AG04450 (cell line): ENCODE measurements at regions of chrX and their contacts with region 1.

Region 1: DNA sequence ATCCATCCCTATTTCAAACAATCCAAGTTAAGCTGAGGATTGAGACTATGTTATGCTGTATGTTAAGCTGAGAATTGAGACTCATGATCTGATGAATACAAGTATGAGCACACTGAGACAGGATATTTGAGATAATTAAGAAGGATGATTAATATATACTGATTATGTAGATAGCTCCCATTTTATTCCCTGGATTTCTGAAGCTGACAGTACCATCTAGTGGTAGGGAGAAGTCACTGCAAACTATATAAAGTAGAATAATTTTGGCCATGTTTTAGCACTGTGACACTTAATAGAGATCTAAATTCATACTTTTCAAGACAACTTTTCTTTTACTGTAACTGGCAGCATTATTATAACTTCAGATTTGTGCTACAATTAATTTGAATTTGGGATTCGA is 63.8 kb upstream of the HPRT1 start:
- DNase-seq: no peak
- H3K4me3 ChIP-seq: no peak overlapping the region
- H3K27ac ChIP-seq: no peak overlapping the region
- H3K27me3 ChIP-seq: no peaks in the 10 kb centered on the region
- CTCF ChIP-seq: peak; percentile 59

Region 2: GRCh38 chrX:134377537-134377936 is 18.6 kb before region 1 on chrX:
- CTCF ChIA-PET with region 1: interaction called, 37 read pairs
- POLR2A ChIA-PET with region 1: no interaction called
- DNase-seq: no peak
- H3K4me3 ChIP-seq: no peak overlapping the region
- H3K27ac ChIP-seq: no peak overlapping the region
- H3K27me3 ChIP-seq: no peaks in the 10 kb centered on the region
- CTCF ChIP-seq: peak; percentile 43

Region 3: DNA sequence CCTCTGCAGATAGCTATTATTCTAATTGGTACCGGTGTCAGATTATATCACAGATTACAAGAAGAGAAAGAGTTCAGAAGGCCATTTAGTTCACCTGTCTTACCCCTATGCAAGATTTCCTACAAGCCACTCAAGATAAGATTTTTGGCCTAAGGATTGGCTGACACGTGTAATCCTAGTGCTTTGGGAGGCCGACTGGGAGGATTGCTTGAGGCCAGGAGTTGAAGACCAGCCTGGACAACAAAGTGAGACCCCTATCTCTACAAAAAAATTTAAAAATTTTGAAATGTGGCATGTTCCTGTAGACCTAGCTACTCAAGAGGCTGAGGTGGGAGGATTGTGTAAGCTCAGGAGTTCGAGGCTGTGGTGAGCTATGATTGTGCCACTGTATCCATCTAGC is 13.4 kb before region 1 on chrX:
- CTCF ChIA-PET with region 1: interaction called, 37 read pairs
- POLR2A ChIA-PET with region 1: no interaction called
- DNase-seq: no peak
- H3K4me3 ChIP-seq: no peak overlapping the region
- H3K27ac ChIP-seq: no peak overlapping the region
- H3K27me3 ChIP-seq: no peaks in the 10 kb centered on the region
- CTCF ChIP-seq: no peak

Region 4: DNA sequence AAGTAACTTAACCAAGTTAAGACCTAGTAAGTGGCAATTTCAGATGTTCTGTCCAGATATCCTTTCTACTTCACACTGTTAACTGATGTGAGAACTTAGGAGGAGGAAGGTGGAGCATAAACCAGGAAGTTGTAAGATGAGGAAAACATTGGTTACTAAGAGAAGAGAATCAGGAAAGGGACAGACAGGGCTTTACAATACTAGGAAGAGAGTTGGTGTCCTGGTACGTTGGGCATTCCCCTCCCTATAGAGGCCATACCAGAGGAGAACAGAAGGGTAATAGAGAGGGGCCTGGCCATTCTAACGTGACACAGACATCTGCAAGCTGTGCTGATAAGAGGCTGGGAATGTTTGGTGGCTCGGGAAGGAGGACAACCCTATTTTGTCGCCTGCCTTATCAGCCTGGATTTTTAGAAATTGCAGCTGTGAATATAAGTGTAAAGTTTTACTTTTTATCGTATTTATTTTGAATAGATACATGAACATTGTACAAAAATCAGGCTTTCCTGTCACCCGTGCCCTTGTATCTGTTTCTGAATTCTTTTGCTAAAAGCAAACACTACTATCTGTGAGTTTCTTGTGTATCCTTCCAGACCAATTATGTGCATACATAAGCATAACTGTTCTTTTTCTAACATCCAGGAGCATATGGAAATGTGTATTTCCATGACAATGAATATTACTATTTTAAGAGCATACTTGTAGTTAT is 10.3 kb after region 1 on chrX:
- CTCF ChIA-PET with region 1: interaction called, 10 read pairs
- POLR2A ChIA-PET with region 1: no interaction called
- DNase-seq: no peak
- H3K4me3 ChIP-seq: no peak overlapping the region
- H3K27ac ChIP-seq: no peak overlapping the region
- H3K27me3 ChIP-seq: no peaks in the 10 kb centered on the region
- CTCF ChIP-seq: no peak

Region 5: DNA sequence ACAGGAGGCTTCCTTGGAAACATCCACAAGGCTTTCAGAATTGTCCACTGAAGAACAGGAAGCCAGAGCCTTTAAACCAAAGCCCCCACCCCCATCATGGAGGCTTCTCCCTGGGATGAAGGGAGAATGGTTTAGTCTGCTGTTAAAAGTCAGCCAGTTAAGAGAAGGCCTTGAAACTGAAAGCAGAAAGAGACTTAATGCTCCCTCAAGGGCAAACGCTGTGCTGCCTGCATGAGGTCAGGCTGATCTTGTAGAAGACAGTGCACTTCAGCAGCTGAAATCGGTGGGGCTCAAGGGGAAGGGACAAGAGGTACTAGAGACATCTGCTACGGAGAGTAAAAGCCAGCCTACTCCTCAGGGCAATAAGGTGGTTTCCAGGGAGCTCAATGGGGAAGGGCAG is 132.8 kb after region 1 on chrX:
- CTCF ChIA-PET with region 1: no interaction called
- POLR2A ChIA-PET with region 1: no interaction called
- DNase-seq: no peak
- H3K4me3 ChIP-seq: no peak overlapping the region
- H3K27ac ChIP-seq: no peak overlapping the region
- H3K27me3 ChIP-seq: no peaks in the 10 kb centered on the region
- CTCF ChIP-seq: no peak

Region 6: DNA sequence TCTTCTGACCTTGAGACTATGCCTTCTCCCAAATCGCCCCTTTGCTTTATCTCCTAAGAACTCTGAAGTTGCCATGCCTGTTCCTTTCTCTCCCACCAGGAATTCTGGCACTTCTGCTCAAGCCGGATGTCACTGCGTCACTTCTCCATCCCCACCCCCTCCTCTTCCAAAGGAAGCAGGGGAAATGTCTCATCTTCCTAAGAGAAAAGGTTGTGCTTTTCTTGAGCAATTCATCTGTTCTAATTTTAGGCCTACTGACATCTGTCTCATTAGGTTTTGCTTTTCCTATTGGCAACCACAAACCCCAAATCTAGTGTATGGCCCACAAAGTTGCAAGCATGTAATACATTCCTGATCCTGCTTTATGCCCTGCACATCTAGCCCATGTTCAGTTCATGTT is 425.2 kb after region 1 on chrX:
- CTCF ChIA-PET with region 1: no interaction called
- POLR2A ChIA-PET with region 1: no interaction called
- DNase-seq: no peak
- H3K4me3 ChIP-seq: no peak overlapping the region
- H3K27ac ChIP-seq: no peak overlapping the region
- H3K27me3 ChIP-seq: no peaks in the 10 kb centered on the region
- CTCF ChIP-seq: no peak